Left cardiac atrium (tissue), 4 donors: ENCODE measurements at regions of chr17 and their contacts with region 1.

Region 1: GRCh38 chr17:19317359-19318095 is 45.0 kb downstream of the B9D1 start:
- DNase-seq: peak; percentile 91
- ATAC-seq: peak; percentile 92 to 93

Region 2: GRCh38 chr17:19336938-19337711 is 19.6 kb after region 1 on chr17:
- intact Hi-C with region 1: loop called in 1 of 2 experiments (anchors 2 kb)
- DNase-seq: no peak
- ATAC-seq: peak; percentile 22 to 54